ENCODE measurements at regions of chr16 and their contacts with region 1.

Region 1: DNA sequence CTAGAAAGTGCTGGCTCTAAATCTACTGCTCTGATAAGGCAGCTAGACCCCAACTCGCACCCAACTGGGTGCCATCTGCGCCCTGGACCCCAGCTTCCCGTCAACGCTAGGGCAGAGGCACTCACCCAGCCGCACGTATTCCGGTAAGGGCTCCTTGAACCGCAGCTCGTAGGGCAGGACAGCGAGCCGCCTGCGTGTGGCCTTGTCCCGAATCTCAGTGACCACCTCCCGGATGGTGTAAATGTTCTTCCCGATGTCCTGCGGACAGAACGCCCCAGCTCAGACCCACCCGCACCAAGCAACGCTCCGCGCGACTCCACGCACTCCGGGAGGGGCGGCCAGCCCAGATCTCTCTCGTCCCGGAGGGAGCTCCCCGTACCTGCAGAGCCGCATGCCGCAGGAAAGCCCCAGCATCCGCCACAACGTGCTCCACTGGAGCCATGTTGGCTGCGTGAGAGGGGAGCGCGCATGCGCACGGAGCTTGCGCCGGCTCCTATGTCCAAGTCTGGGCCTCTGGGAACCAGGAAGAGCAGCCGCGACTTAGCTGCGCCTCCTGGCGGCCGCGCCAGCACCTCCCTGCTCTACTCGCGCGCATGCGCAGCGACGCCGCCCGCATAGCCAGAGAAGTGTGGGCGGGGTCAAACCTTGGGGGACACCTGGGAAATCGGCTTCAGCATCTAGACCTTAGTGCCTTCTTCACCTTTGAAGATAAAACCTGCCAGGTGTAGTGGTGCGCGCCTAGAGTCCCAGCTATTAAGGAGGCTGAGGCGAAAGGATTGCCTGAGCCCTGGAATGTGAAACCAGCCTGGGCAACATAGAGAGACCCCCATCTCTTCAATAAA is at the start of gene NOB1:
- DNase-seq: peak; percentile 92
- ATAC-seq: peak; percentile 97
- H3K4me3 ChIP-seq: peak within 1 kb of the TSS; percentile 93
- H3K27ac ChIP-seq: peak within 1 kb of the TSS; percentile 97
- H3K4me1 ChIP-seq: peaks cover 5% of the 10 kb centered on the region
- H3K27me3 ChIP-seq: no peaks in the 10 kb centered on the region
- CTCF ChIP-seq: peak; percentile 99 to 100 (median 99); a peak in 5 of 6 replicates
- EP300 ChIP-seq: no peak
- POLR2A ChIP-seq: peak; percentile 98
- RAD21 ChIP-seq: peak; percentile 72
- polyA plus RNA-seq, gene NOB1: 31.1 to 44.0 TPM

Region 2: DNA sequence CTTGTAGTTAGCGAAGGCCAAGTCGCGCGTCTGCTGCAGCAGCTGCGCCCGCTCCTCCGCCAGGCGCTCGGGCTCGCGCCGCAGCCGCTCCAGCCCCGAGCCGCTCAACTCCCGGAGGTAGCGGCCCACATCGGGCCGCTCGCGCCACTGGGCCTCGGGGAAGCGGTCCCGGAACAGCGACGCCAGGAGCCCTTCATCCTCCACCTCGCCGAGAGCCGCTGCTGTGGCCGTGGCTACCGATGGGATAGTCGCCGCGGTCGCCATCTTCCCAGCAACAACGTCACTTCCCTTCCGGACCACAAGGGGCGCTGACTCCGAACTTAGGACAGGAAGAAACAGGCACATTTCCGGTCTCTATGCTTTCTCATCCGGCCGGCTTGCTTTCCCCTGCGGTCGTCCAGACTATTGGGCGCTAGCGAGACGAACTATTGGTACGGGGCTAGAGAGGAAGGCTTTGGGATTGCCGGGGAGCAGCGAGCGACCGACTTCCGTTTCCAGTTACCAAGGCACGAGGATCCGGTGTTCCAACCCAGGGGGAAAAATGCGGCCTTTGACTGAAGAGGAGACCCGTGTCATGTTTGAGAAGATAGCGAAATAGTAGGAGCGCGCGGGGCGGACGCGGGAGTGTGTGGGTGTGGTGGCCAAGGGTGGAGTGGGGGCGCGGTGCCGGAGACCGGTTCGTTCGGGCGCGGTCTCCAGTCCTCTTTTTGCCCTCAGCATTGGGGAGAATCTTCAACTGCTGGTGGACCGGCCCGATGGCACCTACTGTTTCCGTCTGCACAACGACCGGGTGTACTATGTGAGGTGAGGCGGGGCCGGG is 415.2 kb before region 1 on chr16 and contains the starts of genes COG8 and NIP7:
- CTCF ChIA-PET with region 1: no interaction called
- POLR2A ChIA-PET with region 1: interaction called, 4 read pairs
- RAD21 ChIA-PET with region 1: no interaction called
- SMC1A ChIA-PET with region 1: interaction called, 3 read pairs
- in situ Hi-C with region 1: no loop called
- intact Hi-C with region 1: loop called (anchors 10 kb)
- DNase-seq: peak; percentile 92
- ATAC-seq: peak; percentile 97
- H3K4me3 ChIP-seq: peak within 1 kb of the TSS; percentile 91
- H3K27ac ChIP-seq: peak within 1 kb of the TSS; percentile 85
- H3K4me1 ChIP-seq: peaks cover 5% of the 10 kb centered on the region
- H3K27me3 ChIP-seq: no peaks in the 10 kb centered on the region
- CTCF ChIP-seq: peak; percentile 70 to 83 (median 80)
- EP300 ChIP-seq: 0 out of 4 replicates have a peak, but pooled peaks of 1 of the 2 experiments have one; percentile 28
- POLR2A ChIP-seq: peak; percentile 98
- RAD21 ChIP-seq: no peak
- polyA plus RNA-seq, gene COG8: 2.8 to 3.1 TPM
- polyA plus RNA-seq, gene NIP7: 57.8 to 62.9 TPM

Region 3: DNA sequence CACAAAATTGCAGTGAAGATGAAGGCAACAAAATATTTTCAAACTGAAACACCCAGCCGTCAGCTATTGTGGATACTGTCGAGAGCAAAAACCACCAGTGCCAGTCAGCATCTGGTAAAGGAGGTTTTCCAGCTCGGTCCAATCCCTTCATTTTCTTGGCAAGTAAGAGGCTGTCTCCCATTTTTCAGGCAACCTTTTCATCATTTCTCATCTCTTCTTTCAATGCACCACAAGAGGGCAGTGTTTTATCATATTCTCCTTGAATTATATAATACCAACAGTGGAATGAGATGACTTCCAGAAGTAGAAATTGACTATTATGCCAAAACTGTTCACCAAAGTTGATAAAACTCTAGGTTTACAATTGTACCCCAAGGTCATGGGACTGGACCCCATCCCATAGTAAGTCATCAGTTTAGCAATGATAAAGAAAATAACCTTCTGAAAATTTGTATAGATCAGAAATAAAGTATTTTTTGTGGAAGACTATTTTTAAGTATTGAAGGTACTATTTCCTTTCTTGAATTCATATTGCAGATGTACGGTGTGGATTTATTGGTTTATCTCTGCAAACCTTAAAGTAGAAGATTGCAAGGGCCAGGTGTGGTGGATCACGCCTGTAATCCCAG is 45.1 kb before region 1 on chr16:
- CTCF ChIA-PET with region 1: interaction called, 95 read pairs
- POLR2A ChIA-PET with region 1: interaction called, 4 read pairs
- RAD21 ChIA-PET with region 1: interaction called, 32 read pairs
- SMC1A ChIA-PET with region 1: interaction called, 34 read pairs
- in situ Hi-C with region 1: no loop called
- intact Hi-C with region 1: loop called (anchors 1 kb)
- DNase-seq: peak; percentile 15
- ATAC-seq: peak; percentile 83
- H3K4me3 ChIP-seq: no peak overlapping the region
- H3K27ac ChIP-seq: no peak overlapping the region
- H3K4me1 ChIP-seq: no peaks in the 10 kb centered on the region
- H3K27me3 ChIP-seq: no peaks in the 10 kb centered on the region
- CTCF ChIP-seq: peak; percentile 43 to 74 (median 64); a peak in 5 of 6 replicates
- EP300 ChIP-seq: no peak
- POLR2A ChIP-seq: no peak
- RAD21 ChIP-seq: peak; percentile 73

Region 4: GRCh38 chr16:69741919-69742904 is 12.5 kb before region 1 on chr16:
- CTCF ChIA-PET with region 1: interaction called, 12 read pairs
- POLR2A ChIA-PET with region 1: interaction called, 5 read pairs
- RAD21 ChIA-PET with region 1: interaction called, 5 read pairs
- SMC1A ChIA-PET with region 1: interaction called, 5 read pairs
- in situ Hi-C with region 1: no loop called
- intact Hi-C with region 1: no loop called
- DNase-seq: no peak
- ATAC-seq: no peak
- H3K4me3 ChIP-seq: no peak overlapping the region
- H3K27ac ChIP-seq: no peak overlapping the region
- H3K4me1 ChIP-seq: no peaks in the 10 kb centered on the region
- H3K27me3 ChIP-seq: no peaks in the 10 kb centered on the region
- CTCF ChIP-seq: no peak
- EP300 ChIP-seq: no peak
- POLR2A ChIP-seq: no peak
- RAD21 ChIP-seq: no peak

Region 5: GRCh38 chr16:69773260-69773947 is 18.7 kb after region 1 on chr16:
- CTCF ChIA-PET with region 1: interaction called, 25 read pairs
- POLR2A ChIA-PET with region 1: interaction called, 3 read pairs
- RAD21 ChIA-PET with region 1: interaction called, 5 read pairs
- SMC1A ChIA-PET with region 1: interaction called, 8 read pairs
- in situ Hi-C with region 1: no loop called
- intact Hi-C with region 1: no loop called
- DNase-seq: no peak
- ATAC-seq: peak; percentile 45
- H3K4me3 ChIP-seq: no peak overlapping the region
- H3K27ac ChIP-seq: no peak overlapping the region
- H3K4me1 ChIP-seq: peaks cover 30% of the 10 kb centered on the region
- H3K27me3 ChIP-seq: no peaks in the 10 kb centered on the region
- CTCF ChIP-seq: no peak
- EP300 ChIP-seq: no peak
- POLR2A ChIP-seq: no peak
- RAD21 ChIP-seq: no peak

Region 6: DNA sequence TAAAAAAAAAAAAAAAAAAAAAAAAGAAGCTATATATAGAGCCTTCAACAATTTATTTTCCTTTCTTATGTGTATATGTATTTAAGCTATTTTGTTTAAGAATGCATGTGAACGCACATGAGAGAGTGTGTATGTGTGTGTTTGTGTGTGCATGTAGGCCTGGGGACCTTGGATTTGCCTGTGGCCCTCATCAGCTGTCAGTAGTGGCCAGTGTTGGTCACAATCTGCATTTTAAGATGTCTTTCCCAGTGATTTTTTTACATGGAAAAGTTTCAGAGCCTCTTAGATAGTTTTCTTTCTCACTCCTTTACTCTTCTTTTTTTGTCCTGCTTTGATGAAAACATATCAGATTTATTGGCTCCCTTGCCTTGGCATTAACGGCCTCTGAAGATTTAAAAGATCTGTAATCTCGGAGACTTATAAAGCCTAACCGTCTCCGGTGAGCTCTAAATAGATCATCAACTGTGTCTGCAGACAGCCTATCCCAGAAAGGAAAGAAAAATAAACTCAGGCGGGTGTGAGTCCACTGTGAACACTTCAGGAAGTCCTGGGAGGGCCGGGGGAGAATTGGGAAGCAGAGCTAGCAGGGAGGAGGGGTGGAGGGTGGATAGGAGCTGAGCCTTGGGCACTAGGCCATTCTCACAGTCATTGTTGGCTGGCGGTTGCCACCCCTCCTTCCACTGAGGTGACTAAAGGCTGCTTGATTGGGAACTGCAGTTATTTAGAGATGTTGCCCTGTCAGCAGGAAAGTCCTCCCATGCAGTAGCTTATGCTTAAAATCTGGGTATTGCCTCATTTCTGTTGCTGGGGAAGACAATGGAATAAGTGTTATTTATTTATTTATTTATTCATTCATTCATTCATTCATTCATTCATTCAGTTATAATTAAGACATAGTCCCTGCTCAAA is 94.2 kb after region 1 on chr16:
- CTCF ChIA-PET with region 1: no interaction called
- POLR2A ChIA-PET with region 1: no interaction called
- RAD21 ChIA-PET with region 1: no interaction called
- SMC1A ChIA-PET with region 1: no interaction called
- in situ Hi-C with region 1: no loop called
- intact Hi-C with region 1: no loop called
- DNase-seq: no peak
- ATAC-seq: no peak
- H3K4me3 ChIP-seq: no peak overlapping the region
- H3K27ac ChIP-seq: no peak overlapping the region
- H3K4me1 ChIP-seq: no peaks in the 10 kb centered on the region
- H3K27me3 ChIP-seq: no peaks in the 10 kb centered on the region
- CTCF ChIP-seq: no peak
- EP300 ChIP-seq: no peak
- POLR2A ChIP-seq: no peak
- RAD21 ChIP-seq: no peak